ENCODE measurements at regions of chr17 and their contacts with region 1.

Region 1: DNA sequence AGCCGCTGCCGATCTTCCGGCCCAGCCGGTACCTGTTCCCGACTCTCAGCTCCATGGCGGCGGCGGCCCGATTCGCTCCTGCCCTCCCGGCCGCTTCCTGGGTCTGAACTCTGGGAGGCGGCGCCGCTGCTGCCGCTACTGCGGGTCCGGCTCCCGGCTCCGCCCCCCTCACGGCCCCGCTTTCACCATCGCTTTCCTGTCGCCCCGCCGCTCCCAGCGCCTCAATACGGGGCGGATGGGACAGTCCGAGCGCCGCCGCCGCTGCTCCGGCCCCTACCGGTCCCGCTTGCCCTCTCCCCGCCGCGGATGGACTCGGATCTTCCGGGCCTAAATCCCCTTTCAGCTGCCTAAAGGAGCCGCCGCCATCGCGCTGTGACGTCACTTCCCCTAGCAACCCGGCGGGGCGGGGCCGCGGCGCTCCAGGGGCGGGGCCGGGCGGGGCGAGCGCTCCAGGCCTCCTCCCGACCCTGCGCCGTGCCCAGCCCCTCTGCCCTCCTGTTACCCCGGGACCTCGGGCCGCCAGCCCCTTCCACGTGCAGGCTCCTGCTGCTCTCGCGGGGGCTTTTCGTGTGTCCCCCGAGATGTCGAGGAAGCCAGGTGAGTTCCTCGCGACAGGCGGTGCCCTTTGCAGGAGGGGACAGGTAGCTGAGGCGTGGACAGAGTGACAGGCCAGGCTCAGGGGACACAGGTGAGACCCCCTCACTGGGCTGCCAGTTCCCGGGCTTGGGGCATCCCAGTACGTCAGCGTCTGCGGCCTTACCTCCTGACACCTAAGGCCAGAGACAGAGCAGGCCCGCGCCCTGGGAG is at the start of gene CSNK1D:
- DNase-seq: peak; percentile 84 to 95 (median 92)
- ATAC-seq: peak; percentile 79
- H3K4me3 ChIP-seq: peak within 1 kb of the TSS; percentile 75
- H3K4me3 Mint-ChIP-seq: peak within 1 kb of the TSS; percentile 98
- H3K27ac ChIP-seq: peak within 1 kb of the TSS; percentile 70 to 78
- H3K27ac Mint-ChIP-seq: peak within 1 kb of the TSS; percentile 99
- H3K4me1 ChIP-seq: peaks cover 50% of the 10 kb centered on the region
- H3K4me1 Mint-ChIP-seq: peaks cover 39% of the 10 kb centered on the region
- H3K27me3 ChIP-seq: no peaks in the 10 kb centered on the region
- H3K27me3 Mint-ChIP-seq: no peaks in the 10 kb centered on the region
- CTCF ChIP-seq: no peak
- total RNA-seq, gene CSNK1D: 277 to 286 TPM

Region 2: DNA sequence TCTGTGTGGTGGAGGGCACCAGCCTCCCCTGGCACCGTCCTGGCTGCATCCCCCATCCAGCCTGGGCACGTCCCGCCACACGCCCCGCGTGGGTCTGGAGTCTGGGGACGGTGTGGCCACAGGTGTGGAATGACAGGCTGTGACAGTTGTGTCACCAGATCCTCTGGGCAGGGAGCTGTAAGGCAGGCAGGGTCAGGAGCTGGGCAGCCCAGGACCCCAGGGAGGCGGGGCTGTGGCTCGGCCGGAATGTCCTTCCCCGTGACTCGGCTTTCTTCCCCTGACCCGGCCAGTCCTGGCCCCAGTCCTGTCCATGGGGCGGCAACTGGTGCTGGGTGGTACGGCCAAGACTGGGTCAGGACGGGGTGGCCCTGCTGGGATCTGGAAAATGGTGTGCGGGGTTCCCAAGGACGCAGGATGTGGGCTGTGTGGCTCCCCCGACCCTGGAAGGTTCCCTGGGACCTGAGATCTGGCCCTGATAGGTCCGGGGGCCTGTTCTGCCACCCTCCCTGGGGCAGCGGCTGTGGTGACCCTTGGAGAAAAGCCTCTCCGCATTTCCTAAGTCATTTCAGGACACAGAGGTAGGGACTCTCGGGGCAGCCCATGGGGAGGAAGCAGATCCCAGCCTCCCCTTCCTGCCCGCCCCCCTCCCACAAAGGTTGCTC is 48.0 kb before region 1 on chr17:
- CTCF ChIA-PET with region 1: no interaction called
- POLR2A ChIA-PET with region 1: no interaction called
- intact Hi-C with region 1: no loop called
- DNase-seq: no peak
- ATAC-seq: no peak
- H3K4me3 ChIP-seq: no peak overlapping the region
- H3K4me3 Mint-ChIP-seq: no peak overlapping the region
- H3K27ac ChIP-seq: no peak overlapping the region
- H3K27ac Mint-ChIP-seq: no peak overlapping the region
- H3K4me1 ChIP-seq: peaks cover 32% of the 10 kb centered on the region
- H3K4me1 Mint-ChIP-seq: peaks cover 16% of the 10 kb centered on the region
- H3K27me3 ChIP-seq: no peaks in the 10 kb centered on the region
- H3K27me3 Mint-ChIP-seq: no peaks in the 10 kb centered on the region
- CTCF ChIP-seq: no peak

Region 3: GRCh38 chr17:82236142-82236981 is 37.2 kb before region 1 on chr17:
- CTCF ChIA-PET with region 1: no interaction called
- POLR2A ChIA-PET with region 1: interaction called, 5 read pairs
- intact Hi-C with region 1: loop called in 1 of 2 experiments (anchors 5 kb)
- DNase-seq: peak; percentile 57 to 87 (median 66)
- ATAC-seq: peak; percentile 48
- H3K4me3 ChIP-seq: no peak overlapping the region
- H3K4me3 Mint-ChIP-seq: no peak overlapping the region
- H3K27ac ChIP-seq: peak overlapping the region in 1 of 2 donors; percentile 32
- H3K27ac Mint-ChIP-seq: peak overlapping the region; percentile 56
- H3K4me1 ChIP-seq: peaks cover 72% of the 10 kb centered on the region
- H3K4me1 Mint-ChIP-seq: peaks cover 40% of the 10 kb centered on the region
- H3K27me3 ChIP-seq: no peaks in the 10 kb centered on the region
- H3K27me3 Mint-ChIP-seq: no peaks in the 10 kb centered on the region
- CTCF ChIP-seq: peak; percentile 84

Region 4: DNA sequence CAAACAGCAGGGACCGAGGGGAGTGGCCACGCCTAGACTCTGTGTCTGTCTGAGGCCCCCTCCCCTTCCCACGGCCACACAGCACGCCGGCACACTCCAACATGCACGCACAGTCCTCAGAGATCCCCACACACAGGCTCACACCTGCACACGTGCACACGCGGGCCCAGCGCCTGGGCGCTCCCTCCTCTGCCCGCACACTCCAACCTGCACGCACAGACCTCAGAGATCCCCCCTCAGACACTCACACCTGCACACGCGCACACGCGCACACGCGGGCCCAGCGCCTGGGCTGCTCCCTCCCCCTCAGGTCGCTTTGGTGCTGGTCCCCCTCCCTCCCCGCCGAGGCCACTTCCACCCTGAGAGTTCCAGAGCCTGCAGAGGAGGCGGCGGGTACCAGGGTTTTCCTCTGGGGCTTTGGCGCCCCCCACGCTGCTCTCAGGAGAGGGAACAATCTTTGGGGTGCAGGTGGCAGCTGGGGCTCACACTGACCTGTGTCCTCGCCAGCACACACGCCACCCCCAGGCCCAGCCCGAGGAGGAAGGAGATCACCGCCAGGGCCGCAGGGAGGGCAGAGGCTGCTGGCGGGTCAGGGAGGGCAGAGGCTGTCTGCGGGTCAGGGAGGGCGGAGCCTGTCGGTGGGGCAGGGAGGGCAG is 42.3 kb after region 1 on chr17:
- CTCF ChIA-PET with region 1: no interaction called
- POLR2A ChIA-PET with region 1: interaction called, 3 read pairs
- intact Hi-C with region 1: loop called (anchors 1 to 2 kb)
- DNase-seq: peak in 11 of 14 experiments; percentile 43 to 78 (median 68)
- ATAC-seq: peak; percentile 45
- H3K4me3 ChIP-seq: peak overlapping the region; percentile 81
- H3K4me3 Mint-ChIP-seq: peak overlapping the region; percentile 99
- H3K27ac ChIP-seq: peak overlapping the region; percentile 31 to 80
- H3K27ac Mint-ChIP-seq: no peak overlapping the region
- H3K4me1 ChIP-seq: peaks cover 58% of the 10 kb centered on the region
- H3K4me1 Mint-ChIP-seq: peaks cover 25% of the 10 kb centered on the region
- H3K27me3 ChIP-seq: no peaks in the 10 kb centered on the region
- H3K27me3 Mint-ChIP-seq: no peaks in the 10 kb centered on the region
- CTCF ChIP-seq: no peak

Region 5: GRCh38 chr17:82636626-82637598 is 363.4 kb after region 1 on chr17:
- CTCF ChIA-PET with region 1: no interaction called
- POLR2A ChIA-PET with region 1: no interaction called
- intact Hi-C with region 1: no loop called
- DNase-seq: no peak
- ATAC-seq: no peak
- H3K4me3 ChIP-seq: no peak overlapping the region
- H3K4me3 Mint-ChIP-seq: no peak overlapping the region
- H3K27ac ChIP-seq: no peak overlapping the region
- H3K27ac Mint-ChIP-seq: no peak overlapping the region
- H3K4me1 ChIP-seq: peaks cover 21% of the 10 kb centered on the region
- H3K4me1 Mint-ChIP-seq: peaks cover 5% of the 10 kb centered on the region
- H3K27me3 ChIP-seq: no peaks in the 10 kb centered on the region
- H3K27me3 Mint-ChIP-seq: no peaks in the 10 kb centered on the region
- CTCF ChIP-seq: no peak